ENCODE measurements at regions of chr7 and their contacts with region 1.

Region 1: GRCh38 chr7:1065263-1066260 is 21.2 kb downstream of the GPR146 start:
- DNase-seq: peak; percentile 96

Region 2: GRCh38 chr7:985915-986741 is 79.4 kb before region 1 on chr7:
- intact Hi-C with region 1: loop called in 1 of 2 experiments (anchors 2 kb)
- DNase-seq: no peak

Region 3: DNA sequence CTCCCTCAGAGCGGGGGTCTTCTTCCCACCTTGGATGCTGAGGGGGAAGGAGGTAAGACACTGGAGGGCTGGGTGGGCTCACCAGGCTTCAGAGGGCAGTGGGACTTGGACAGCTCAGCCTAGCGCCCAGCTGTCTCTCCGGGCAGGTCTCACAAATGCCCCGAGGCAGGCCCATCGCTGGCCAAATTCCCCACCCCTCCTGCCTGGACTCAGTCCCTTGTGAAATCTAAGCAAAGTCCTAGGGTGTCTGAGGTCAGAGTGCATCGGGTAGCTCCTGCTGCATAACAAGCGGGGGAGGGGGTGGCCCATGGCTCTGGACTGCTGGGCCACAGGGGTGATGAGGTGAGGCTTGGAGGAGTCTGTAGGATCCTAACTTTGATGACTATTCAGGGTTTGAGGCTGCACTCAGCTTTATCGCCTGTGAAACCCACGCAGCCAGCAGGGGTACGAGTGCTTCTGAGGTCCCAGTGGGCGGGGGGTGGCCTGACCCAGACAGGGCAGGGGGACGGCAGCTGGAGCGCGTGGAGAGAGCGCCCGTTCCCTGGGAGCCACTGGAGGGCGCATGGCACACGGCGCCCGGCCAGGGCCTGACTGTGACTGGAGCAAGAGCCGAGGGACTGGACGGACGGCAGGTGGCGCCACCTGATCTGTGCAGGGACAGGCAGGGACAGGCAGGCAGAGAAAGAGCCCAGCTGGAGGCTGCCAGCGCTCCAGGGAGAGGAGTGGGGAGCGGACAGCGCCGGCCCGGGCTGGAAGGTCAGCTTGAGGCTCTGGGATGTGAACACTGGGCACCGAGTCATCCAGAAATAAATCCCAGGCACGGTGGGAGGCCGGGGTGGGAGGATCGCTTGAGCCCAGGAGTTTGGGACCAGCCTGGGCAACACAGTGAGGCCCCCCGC is 72.6 kb before region 1 on chr7:
- intact Hi-C with region 1: loop called (anchors 1 to 2 kb)
- DNase-seq: peak; percentile 99

Region 4: DNA sequence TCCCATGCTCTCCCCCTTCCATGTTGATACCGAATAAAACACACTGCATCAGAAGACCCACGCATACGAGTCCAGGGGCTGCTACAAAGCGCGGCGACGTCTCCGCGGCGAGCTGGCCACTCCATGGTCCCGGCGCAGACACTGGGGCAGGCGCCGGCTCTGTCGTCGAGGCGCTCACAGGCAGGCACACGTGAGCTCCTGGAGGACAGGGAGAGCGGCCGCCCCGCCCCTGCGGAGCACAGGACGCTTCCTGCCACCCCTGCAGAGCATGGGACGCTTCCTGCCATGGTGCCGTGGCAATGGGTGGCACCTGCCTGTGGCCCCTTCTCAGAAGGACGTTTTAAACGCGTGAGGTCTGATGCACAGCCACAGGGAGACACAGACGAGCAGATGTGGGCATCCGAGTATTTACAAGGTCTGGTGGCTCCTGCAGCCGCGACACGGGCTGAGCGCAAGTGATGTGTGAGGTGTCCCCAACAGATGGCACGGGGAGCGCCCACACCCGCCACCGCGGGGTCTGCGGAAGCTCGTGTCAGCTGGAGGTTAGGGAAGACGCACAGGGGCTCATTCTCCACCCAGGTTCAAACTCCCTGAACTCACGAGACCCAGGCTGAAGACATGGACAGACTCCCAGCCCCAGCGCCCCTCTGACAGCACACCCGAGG is 42.6 kb before region 1 on chr7:
- intact Hi-C with region 1: loop called in 1 of 2 experiments (anchors 1 kb)
- DNase-seq: no peak

Region 5: GRCh38 chr7:1044191-1045068 is 21.1 kb before region 1 on chr7 and contains the start of gene GPR146:
- intact Hi-C with region 1: no loop called
- DNase-seq: peak; percentile 99
- total RNA-seq, gene GPR146: 9.4 to 14.3 TPM